Right ventricle myocardium superior (tissue), 1 donor: ENCODE measurements at regions of chr11 and their contacts with region 1.

Region 1: DNA sequence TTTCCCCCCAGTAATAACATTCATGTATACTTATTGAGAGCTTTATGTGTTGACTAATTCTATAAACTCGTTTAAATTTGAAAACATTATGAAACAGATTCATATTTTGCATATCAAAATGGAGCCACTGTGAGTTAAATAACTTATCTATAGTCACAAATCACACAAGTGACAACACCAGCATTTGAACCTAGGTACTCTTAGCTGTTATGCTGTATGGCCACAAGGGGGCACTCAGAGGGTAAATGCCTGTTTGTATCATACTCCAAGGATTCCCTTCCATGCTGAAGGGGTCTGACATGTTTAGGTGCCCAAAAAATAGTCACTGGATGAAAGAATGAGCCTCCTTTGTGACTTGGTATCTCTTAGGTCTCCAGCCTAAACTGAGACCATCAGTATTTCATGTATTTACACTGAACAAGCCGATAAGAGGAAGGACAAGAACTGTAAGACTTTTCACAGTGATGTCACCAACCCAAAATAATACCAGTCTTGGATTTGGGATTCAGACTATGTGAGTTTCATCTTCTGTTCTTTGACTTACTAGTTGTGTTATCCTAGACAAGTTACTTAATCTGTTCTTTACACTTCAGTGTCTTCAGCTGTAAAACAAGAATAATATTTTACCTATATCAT is 12.2 kb upstream of the OR52D1 start:
- DNase-seq: no peak
- ATAC-seq: peak; percentile 55

Region 2: DNA sequence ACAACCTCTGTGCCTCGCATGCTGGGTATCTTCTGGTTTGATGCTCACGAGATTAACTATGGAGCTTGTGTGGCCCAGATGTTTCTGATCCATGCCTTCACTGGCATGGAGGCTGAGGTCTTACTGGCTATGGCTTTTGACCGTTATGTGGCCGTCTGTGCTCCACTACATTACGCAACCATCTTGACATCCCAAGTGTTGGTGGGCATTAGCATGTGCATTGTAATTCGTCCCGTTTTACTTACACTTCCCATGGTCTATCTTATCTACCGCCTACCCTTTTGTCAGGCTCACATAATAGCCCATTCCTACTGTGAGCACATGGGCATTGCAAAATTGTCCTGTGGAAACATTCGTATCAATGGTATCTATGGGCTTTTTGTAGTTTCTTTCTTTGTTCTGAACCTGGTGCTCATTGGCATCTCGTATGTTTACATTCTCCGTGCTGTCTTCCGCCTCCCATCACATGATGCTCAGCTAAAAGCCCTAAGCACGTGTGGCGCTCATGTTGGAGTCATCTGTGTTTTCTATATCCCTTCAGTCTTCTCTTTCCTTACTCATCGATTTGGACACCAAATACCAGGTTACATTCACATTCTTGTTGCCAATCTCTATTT is 429.4 kb before region 1 on chr11:
- intact Hi-C with region 1: no loop called
- DNase-seq: no peak
- ATAC-seq: no peak

Region 3: DNA sequence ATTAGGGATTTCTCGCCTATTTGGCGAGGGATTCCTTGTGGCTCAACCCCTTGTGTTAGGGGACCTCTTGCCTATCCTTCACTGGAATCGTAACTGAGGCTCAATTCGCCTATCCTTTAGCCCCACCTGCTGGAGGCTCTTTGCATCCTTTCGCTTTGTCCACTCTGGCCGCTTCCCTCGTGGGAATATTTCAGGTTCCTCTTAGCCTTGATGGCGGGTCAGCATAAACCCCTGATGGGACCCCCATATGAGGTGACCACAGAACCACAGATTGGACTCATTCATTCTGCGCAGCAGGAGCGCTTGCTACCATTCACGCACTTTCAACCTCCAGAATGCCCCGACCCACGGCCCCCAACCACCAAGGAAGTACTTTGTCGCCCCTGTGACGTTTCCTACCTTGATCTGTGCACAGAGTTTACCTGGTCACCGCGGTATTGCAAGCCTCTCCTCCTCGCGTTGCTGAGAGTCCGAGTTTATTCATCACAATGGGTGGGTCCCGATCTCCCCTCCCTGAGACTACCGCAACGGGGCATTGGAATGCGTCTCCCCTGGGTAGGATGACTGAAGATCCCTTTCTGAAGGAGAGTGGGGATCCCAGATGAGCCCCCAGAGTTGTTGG is 332.3 kb after region 1 on chr11 and contains the start of gene OR52N2:
- intact Hi-C with region 1: loop called (anchors 5 kb)
- DNase-seq: peak; percentile 59
- ATAC-seq: peak; percentile 94
- total RNA-seq, gene OR52N2: not detected